CD14-positive monocyte (primary cell): ENCODE measurements at regions of chr12 and their contacts with region 1.

Region 1: GRCh38 chr12:42129595-42130204 is 15.0 kb downstream of the GXYLT1 start:
- DNase-seq: peak in 2 of 3 donors; percentile 48 to 54
- H3K4me3 ChIP-seq: no peak overlapping the region
- H3K4me3 Mint-ChIP-seq: no peak overlapping the region
- H3K27ac ChIP-seq: no peak overlapping the region
- H3K27ac Mint-ChIP-seq: no peak overlapping the region
- H3K4me1 ChIP-seq: peaks cover 9 to 16% of the 10 kb centered on the region in 2 donors
- H3K4me1 Mint-ChIP-seq: peaks cover 13% of the 10 kb centered on the region
- H3K27me3 ChIP-seq: no peaks in the 10 kb centered on the region
- H3K27me3 Mint-ChIP-seq: no peaks in the 10 kb centered on the region
- CTCF ChIP-seq: peak; percentile 73

Region 2: GRCh38 chr12:42332301-42333285 is 202.9 kb after region 1 on chr12:
- intact Hi-C with region 1: loop called in 1 of 2 experiments (anchors 5 kb)
- DNase-seq: peak; percentile 26 to 49 (median 29)
- H3K4me3 ChIP-seq: no peak overlapping the region
- H3K4me3 Mint-ChIP-seq: no peak overlapping the region
- H3K27ac ChIP-seq: no peak overlapping the region
- H3K27ac Mint-ChIP-seq: peak overlapping the region in 1 of 7 donors; percentile 60
- H3K4me1 ChIP-seq: peaks cover 9 to 21% of the 10 kb centered on the region in 2 donors
- H3K4me1 Mint-ChIP-seq: peaks cover 42% of the 10 kb centered on the region
- H3K27me3 ChIP-seq: no peaks in the 10 kb centered on the region
- H3K27me3 Mint-ChIP-seq: peaks cover 0 to 2% (median 0%) of the 10 kb centered on the region in 3 donors
- CTCF ChIP-seq: peak; percentile 80